OCI-LY7 (cell line): ENCODE measurements at regions of chr16 and their contacts with region 1.

Region 1: GRCh38 chr16:53435066-53435688 is 906 bp downstream of the RBL2 start:
- DNase-seq: peak; percentile 86
- H3K4me3 ChIP-seq: peak overlapping the region; percentile 83
- H3K27ac ChIP-seq: peak overlapping the region; percentile 80
- H3K4me1 ChIP-seq: peaks cover 17% of the 10 kb centered on the region
- CTCF ChIP-seq: no peak

Region 2: DNA sequence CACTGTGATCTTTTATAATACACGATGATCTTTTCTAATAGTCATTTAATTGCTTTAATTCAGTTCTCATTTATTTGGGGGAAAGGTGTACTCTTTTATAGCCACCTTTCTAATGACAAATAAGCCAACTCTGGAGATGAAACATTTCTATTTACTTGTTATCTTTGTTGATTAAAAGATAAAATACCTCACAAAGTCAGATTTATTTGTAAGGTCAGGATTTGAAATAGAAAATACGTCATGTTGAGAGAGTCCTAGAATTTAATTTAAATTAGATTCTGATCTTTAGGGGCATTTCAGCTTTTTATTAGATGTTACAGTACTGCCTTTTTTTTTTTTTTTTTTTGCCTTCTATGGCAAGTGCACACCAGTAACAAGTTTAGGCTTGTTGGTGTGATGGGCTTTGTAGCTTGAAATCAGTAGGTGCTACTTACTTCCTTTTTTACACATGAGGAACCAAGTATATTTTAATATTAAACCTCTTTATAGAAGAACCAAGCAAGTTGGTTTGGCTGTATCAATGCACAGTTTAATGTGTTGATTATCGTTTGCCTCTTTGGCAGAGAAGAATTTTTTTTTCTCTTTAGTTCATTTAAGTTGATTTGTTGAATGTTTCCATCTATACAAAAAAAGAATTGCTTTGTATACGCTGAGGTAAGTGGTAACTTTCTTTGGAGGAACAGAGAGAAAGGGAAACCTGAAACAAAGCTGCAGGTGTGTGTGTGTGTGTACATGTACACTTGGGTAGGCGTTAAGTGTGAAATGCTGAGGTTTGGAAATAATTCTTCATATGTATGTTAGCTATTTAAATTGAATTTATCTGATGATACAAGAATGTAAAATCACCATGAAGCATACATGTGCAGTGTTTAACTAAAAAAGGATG is 14.7 kb after region 1 on chr16:
- CTCF ChIA-PET with region 1: interaction called, 3 read pairs
- POLR2A ChIA-PET with region 1: interaction called, 10 read pairs
- intact Hi-C with region 1: no loop called
- DNase-seq: peak; percentile 63
- H3K4me3 ChIP-seq: peak overlapping the region; percentile 34
- H3K27ac ChIP-seq: peak overlapping the region; percentile 70
- H3K4me1 ChIP-seq: peaks cover 17% of the 10 kb centered on the region
- CTCF ChIP-seq: no peak

Region 3: DNA sequence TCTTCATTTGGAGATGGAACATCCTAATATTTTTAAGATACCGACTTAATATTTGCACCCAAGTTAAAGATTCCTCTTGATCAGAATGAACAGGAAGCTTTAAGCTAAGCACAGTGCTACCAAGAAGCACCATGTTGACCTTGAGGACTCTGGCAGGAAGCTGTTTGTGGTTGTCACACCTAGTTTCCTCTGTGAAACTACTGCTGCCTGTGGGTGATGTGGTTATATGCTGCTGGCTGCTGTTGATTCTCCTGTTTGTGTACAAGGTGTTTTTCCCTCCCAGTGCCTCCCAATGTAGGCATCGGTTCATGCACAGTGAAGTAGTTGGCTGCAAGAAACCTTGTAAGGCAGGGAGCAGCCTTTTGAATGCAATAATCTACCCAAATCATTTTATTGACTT is 22.5 kb after region 1 on chr16:
- CTCF ChIA-PET with region 1: no interaction called
- POLR2A ChIA-PET with region 1: interaction called, 10 read pairs
- intact Hi-C with region 1: no loop called
- DNase-seq: peak; percentile 89
- H3K4me3 ChIP-seq: peak overlapping the region; percentile 40
- H3K27ac ChIP-seq: peak overlapping the region; percentile 79
- H3K4me1 ChIP-seq: peaks cover 24% of the 10 kb centered on the region
- CTCF ChIP-seq: peak; percentile 47; the same call in 1 of the 2 replicates

Region 4: DNA sequence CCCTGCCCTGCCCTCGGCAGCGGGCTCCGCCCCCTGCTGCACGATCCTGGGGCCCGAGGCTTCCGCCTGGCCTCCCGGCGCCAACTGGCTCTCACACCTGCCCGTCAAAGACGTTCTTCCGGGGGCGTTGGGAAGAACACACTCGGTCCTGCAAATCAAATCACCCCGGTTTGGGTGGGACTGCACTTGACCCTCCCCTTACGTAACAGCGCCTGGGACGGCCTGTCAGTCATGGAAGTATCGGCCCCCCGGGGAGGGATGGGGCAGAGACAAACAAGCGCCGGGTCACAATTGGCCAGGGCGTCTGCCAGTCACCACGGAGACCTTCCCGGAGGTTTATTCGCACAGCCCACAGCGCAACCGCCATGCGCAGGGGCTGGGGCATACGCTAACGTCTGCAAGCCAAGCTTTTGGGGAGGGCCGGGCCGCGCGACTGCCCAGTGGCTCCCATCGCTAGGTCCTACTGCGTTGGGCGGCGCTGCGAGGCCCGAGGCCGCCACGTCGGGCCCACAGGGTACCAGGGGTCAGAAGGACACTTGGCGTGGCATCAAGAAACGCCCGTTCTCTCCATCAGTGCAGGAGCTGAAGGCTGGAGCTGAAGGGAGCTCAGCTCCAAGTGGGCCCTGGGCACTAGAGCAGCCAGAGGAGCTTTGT is 68.2 kb after region 1 on chr16:
- CTCF ChIA-PET with region 1: no interaction called
- POLR2A ChIA-PET with region 1: interaction called, 7 read pairs
- intact Hi-C with region 1: loop called (anchors 1 kb)
- DNase-seq: peak; percentile 100
- H3K4me3 ChIP-seq: peak overlapping the region; percentile 82
- H3K27ac ChIP-seq: peak overlapping the region; percentile 49
- H3K4me1 ChIP-seq: peaks cover 23% of the 10 kb centered on the region
- CTCF ChIP-seq: no peak

Region 5: GRCh38 chr16:53583401-53583800 is 148.2 kb after region 1 on chr16:
- CTCF ChIA-PET with region 1: no interaction called
- POLR2A ChIA-PET with region 1: no interaction called
- intact Hi-C with region 1: no loop called
- DNase-seq: no peak
- H3K4me3 ChIP-seq: no peak overlapping the region
- H3K27ac ChIP-seq: no peak overlapping the region
- H3K4me1 ChIP-seq: no peaks in the 10 kb centered on the region
- CTCF ChIP-seq: no peak

Region 6: DNA sequence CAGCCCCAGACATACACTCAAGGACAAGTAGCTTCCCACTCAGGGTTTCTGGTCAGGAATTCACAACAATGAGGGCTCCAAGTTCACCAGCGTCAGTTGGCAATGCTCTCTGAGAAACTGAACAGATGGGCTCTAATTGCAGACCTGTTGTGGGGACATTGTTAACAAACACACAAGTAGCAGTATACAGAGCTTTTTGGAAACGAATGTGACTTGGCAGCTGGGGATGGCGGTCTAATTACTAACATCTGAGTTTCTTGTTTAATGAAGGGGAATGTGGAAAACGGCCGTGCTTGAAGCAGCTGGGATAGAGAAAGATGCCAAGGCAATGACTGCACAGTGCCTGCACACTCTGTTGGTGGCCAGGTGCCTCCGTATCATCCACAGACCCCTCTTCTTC is 1167.5 kb after region 1 on chr16:
- CTCF ChIA-PET with region 1: no interaction called
- POLR2A ChIA-PET with region 1: no interaction called
- intact Hi-C with region 1: no loop called
- DNase-seq: no peak
- H3K4me3 ChIP-seq: no peak overlapping the region
- H3K27ac ChIP-seq: no peak overlapping the region
- H3K4me1 ChIP-seq: no peaks in the 10 kb centered on the region
- CTCF ChIP-seq: no peak